ENCODE measurements at regions of chr2 and their contacts with region 1.

Region 1: DNA sequence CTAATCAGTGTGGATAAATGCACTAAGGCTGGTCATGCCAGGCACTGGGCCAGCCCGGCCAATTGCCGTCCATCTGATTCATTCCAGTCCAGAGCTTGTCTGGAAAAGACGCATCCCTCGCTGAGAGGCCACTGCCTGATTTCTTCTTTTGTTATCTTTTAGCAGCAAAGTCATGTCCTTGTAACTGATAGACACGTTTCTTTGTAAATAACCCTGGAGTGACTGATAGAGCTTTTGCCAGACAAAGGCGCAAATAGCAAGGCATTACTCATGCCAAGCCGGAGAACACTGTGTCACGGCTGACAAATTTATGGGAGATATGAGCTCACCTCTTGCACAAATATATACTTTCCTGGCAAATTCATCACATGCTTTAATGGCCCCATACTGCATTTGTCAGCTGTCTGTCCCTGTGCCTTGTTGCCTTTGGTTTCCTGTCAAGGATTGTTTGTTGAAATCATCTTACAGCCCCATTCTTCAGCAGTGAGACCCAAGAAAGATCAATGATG is 164.4 kb downstream of the ETAA1 start:
- DNase-seq: peak; percentile 84
- H3K4me3 Mint-ChIP-seq: peak overlapping the region; percentile 46
- H3K27ac Mint-ChIP-seq: peak overlapping the region; percentile 97
- H3K4me1 Mint-ChIP-seq: peaks cover 39% of the 10 kb centered on the region
- H3K27me3 Mint-ChIP-seq: no peaks in the 10 kb centered on the region
- CTCF ChIP-seq: no peak

Region 2: GRCh38 chr2:67159929-67160328 is 401.6 kb before region 1 on chr2:
- CTCF ChIA-PET with region 1: no interaction called
- POLR2A ChIA-PET with region 1: no interaction called
- intact Hi-C with region 1: no loop called
- DNase-seq: no peak
- H3K4me3 Mint-ChIP-seq: no peak overlapping the region
- H3K27ac Mint-ChIP-seq: no peak overlapping the region
- H3K4me1 Mint-ChIP-seq: no peaks in the 10 kb centered on the region
- H3K27me3 Mint-ChIP-seq: no peaks in the 10 kb centered on the region
- CTCF ChIP-seq: no peak

Region 3: GRCh38 chr2:67526283-67526682 is 35.2 kb before region 1 on chr2:
- CTCF ChIA-PET with region 1: no interaction called
- POLR2A ChIA-PET with region 1: interaction called, 10 read pairs
- intact Hi-C with region 1: no loop called
- DNase-seq: peak; percentile 79
- H3K4me3 Mint-ChIP-seq: no peak overlapping the region
- H3K27ac Mint-ChIP-seq: peak overlapping the region; percentile 89
- H3K4me1 Mint-ChIP-seq: peaks cover 33% of the 10 kb centered on the region
- H3K27me3 Mint-ChIP-seq: no peaks in the 10 kb centered on the region
- CTCF ChIP-seq: no peak

Region 4: GRCh38 chr2:67571785-67572718 is 10.5 kb after region 1 on chr2:
- CTCF ChIA-PET with region 1: interaction called, 3 read pairs
- POLR2A ChIA-PET with region 1: interaction called, 51 read pairs
- intact Hi-C with region 1: no loop called
- DNase-seq: no peak
- H3K4me3 Mint-ChIP-seq: no peak overlapping the region
- H3K27ac Mint-ChIP-seq: peak overlapping the region; percentile 65
- H3K4me1 Mint-ChIP-seq: peaks cover 27% of the 10 kb centered on the region
- H3K27me3 Mint-ChIP-seq: no peaks in the 10 kb centered on the region
- CTCF ChIP-seq: no peak

Region 5: GRCh38 chr2:67733517-67733916 is 172.0 kb after region 1 on chr2:
- CTCF ChIA-PET with region 1: no interaction called
- POLR2A ChIA-PET with region 1: no interaction called
- intact Hi-C with region 1: no loop called
- DNase-seq: peak; percentile 45
- H3K4me3 Mint-ChIP-seq: no peak overlapping the region
- H3K27ac Mint-ChIP-seq: no peak overlapping the region
- H3K4me1 Mint-ChIP-seq: no peaks in the 10 kb centered on the region
- H3K27me3 Mint-ChIP-seq: no peaks in the 10 kb centered on the region
- CTCF ChIP-seq: peak; percentile 36

Region 6: DNA sequence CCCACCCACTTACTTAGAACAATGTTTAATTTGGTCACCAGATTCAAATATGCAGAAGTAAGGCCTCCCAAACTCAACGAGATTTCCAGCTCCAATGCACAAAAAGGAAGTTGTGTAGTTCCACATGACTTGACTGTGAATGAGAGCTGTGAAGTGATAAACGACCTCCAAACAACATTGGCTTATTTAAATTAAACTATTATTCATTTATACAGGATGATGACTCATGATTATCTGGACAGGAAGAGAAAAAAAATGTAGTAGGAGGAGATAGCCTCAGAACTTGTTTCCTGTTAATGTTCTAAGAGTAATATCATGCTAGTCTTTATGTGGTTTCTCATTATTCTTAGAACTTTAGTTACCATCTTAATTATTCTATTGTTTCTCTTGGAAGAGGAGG is 264.0 kb after region 1 on chr2:
- CTCF ChIA-PET with region 1: no interaction called
- POLR2A ChIA-PET with region 1: no interaction called
- intact Hi-C with region 1: loop called (anchors 5 kb)
- DNase-seq: peak; percentile 6
- H3K4me3 Mint-ChIP-seq: no peak overlapping the region
- H3K27ac Mint-ChIP-seq: no peak overlapping the region
- H3K4me1 Mint-ChIP-seq: peaks cover 8% of the 10 kb centered on the region
- H3K27me3 Mint-ChIP-seq: no peaks in the 10 kb centered on the region
- CTCF ChIP-seq: no peak

Measured in MCF 10A (cell line).